ENCODE measurements at regions of chr14 and their contacts with region 1.

Region 1: DNA sequence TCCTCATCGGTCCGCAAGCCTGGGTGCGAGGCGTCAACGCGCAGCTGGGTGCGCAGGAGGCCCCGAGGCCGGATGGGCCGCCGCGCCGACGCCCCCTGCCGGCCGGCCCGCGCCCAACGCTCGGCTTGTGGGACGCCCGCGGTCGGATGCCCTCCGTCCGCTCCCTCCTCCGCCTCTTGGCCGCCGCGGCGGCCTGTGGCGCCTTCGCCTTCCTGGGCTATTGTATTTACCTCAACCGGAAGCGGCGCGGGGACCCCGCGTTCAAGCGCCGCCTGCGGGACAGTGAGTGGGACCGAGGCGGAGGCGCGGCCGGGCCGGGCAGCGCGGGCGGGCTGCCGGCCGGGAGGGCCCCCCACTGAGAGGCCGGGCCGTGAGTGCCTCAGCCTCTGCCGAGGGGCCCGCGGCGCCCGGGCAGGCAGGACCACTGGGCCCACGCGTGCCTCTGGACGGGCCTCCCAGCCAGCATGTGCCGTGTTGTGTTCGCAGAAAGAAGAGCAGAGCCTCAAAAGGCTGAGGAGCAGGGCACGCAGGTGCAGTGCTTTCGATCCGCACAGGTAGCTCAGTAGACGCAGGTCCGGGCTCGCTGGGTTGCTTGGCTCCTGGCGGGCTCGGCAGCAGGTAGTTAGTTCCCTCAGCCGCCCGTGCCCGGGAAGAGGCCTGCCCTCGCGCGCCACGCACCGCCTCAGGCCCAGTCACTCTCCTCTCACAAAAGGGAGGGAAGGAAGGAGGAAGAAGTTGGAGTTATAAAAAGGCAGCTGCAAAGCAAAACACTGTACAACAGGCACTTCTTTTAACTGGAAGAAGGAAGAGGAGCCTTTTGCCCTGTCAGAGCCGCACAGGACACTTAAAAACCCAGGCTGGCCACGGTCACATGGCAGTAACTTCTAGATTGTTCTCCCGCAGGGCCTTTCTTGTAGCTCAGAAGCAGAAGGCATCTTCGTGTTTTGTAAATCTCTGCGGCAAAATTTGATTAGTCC is at the start of gene TOMM20L:
- DNase-seq: peak; percentile 4
- H3K4me3 ChIP-seq: peak within 1 kb of the TSS; percentile 55
- H3K27ac ChIP-seq: no peak within 1 kb of the TSS
- H3K27me3 ChIP-seq: no peaks in the 10 kb centered on the region
- CTCF ChIP-seq: peak; percentile 48; the same call in 1 of the 2 replicates
- polyA plus RNA-seq, gene TOMM20L: not detected in 2 replicates

Region 2: DNA sequence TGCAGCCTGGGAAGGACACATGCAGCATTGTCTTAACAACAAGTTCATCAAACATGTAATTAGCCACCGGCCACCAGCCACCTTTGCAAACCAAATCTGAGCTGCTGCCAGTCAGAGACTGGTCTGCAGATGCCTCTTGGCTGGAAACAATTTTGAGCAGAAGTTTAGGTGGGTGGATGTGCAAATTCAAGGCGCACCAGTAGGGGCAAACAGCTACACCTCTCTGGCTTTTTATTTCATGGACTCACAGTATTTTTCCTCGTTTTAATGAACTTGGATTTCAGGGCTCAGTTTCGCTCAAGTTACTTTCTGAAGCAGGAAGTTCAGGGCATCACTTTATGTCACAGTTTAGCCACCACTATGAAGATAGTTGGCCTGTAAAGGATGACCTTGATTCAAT is 1680.2 kb before region 1 on chr14:
- CTCF ChIA-PET with region 1: no interaction called
- POLR2A ChIA-PET with region 1: no interaction called
- DNase-seq: no peak
- H3K4me3 ChIP-seq: no peak overlapping the region
- H3K27ac ChIP-seq: no peak overlapping the region
- H3K27me3 ChIP-seq: no peaks in the 10 kb centered on the region
- CTCF ChIP-seq: 0 out of 2 replicates have a peak, but pooled peaks have one; percentile 4

Region 3: GRCh38 chr14:58362798-58363412 is 33.2 kb before region 1 on chr14:
- CTCF ChIA-PET with region 1: interaction called, 12 read pairs
- POLR2A ChIA-PET with region 1: no interaction called
- DNase-seq: no peak
- H3K4me3 ChIP-seq: no peak overlapping the region
- H3K27ac ChIP-seq: no peak overlapping the region
- H3K27me3 ChIP-seq: no peaks in the 10 kb centered on the region
- CTCF ChIP-seq: peak; percentile 38

Region 4: GRCh38 chr14:58376791-58377190 is 19.3 kb before region 1 on chr14:
- CTCF ChIA-PET with region 1: interaction called, 15 read pairs
- POLR2A ChIA-PET with region 1: no interaction called
- DNase-seq: no peak
- H3K4me3 ChIP-seq: no peak overlapping the region
- H3K27ac ChIP-seq: no peak overlapping the region
- H3K27me3 ChIP-seq: no peaks in the 10 kb centered on the region
- CTCF ChIP-seq: no peak

Region 5: DNA sequence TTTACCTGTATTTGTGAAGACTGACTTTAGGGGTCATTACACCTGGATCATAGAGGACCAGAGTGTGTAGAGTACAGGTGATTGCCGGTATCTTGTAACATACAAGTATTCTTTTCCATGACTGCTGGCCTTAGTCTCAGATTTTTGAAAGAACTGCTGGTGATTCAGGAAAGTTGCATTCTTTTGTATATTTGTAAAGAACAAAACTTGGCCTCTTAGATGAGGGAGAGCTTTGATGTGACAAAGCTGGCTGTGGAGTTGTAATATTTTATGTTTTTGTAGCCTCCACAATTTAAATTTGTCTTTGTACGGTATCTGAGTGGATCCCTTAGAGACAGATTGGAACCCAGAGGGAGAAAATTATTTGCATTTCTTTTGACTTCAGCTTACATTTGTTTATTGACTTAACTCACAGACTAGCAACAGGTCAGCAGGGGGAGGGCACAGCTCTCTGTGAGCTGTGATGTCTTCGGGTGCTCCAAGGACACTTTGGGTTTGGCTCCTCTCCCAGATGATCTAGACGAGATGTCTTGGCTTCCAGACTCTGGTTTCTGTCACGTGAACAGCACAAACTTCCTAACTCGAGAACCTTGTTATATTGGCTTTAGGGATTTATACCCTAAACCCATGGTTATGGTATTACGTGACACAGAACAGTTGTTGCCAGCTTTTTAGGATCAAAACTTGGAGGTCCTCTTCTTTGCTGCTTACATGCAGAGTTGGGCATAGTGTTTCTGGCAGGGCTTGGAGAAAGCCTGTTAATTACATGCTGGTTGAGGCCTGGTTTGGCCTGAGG is 858.2 kb after region 1 on chr14:
- CTCF ChIA-PET with region 1: no interaction called
- POLR2A ChIA-PET with region 1: no interaction called
- DNase-seq: peak; percentile 82
- H3K4me3 ChIP-seq: no peak overlapping the region
- H3K27ac ChIP-seq: peak overlapping the region; percentile 39
- H3K27me3 ChIP-seq: no peaks in the 10 kb centered on the region
- CTCF ChIP-seq: no peak

Measured in AG04450 (cell line).